Naive thymus-derived CD8-positive, alpha-beta T cell (primary cell): ENCODE measurements at regions of chr1 and their contacts with region 1.

Region 1: DNA sequence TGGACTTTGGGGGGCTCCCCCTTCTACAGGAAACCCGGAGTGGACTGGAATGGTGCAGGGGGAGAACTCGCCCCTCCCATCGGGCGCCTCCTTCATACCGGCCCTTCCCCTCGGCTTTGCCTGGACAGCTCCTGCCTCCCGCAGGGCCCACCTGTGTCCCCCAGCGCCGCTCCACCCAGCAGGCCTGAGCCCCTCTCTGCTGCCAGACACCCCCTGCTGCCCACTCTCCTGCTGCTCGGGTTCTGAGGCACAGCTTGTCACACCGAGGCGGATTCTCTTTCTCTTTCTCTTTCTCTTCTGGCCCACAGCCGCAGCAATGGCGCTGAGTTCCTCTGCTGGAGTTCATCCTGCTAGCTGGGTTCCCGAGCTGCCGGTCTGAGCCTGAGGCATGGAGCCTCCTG is at the start of gene TNFRSF14:
- DNase-seq: peak; percentile 53 to 87 (median 74)
- ATAC-seq: peak; percentile 73 to 79
- H3K4me3 Mint-ChIP-seq: peak within 1 kb of the TSS; percentile 91 to 99 (median 98)
- H3K27ac Mint-ChIP-seq: peak within 1 kb of the TSS; percentile 93 to 99 (median 98)
- H3K4me1 Mint-ChIP-seq: peaks cover 28 to 62% (median 44%) of the 10 kb centered on the region in 4 donors
- H3K27me3 Mint-ChIP-seq: no peaks in the 10 kb centered on the region
- polyA plus RNA-seq, gene TNFRSF14: 45.8 to 61.6 (median 48.9) TPM

Region 2: DNA sequence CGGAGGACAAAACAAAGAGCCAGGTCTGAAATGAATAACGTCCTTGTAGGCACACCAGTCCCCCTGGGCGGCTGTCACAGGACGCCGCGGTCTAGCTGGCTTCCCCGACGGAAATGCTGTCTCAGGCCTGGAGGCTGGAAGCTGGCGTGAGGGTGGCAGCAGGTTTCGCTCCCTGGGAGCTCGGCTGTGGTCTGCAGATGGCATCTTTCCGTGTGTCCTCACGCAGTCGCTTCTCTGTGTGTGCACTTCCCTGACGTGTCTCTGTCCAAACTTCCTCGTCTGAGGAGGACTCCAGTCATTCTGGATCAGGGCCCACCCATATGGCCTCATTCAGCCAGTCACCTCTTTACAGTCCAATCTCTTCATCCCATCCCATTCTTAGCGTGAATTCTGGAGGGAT is 14.1 kb after region 1 on chr1:
- POLR2A ChIA-PET with region 1: interaction called, 15 read pairs
- DNase-seq: no peak
- ATAC-seq: no peak
- H3K4me3 Mint-ChIP-seq: no peak overlapping the region
- H3K27ac Mint-ChIP-seq: peak overlapping the region in 5 of 10 donors; percentile 9 to 47 (median 34)
- H3K4me1 Mint-ChIP-seq: peaks cover 2 to 24% (median 10%) of the 10 kb centered on the region in 4 donors
- H3K27me3 Mint-ChIP-seq: no peaks in the 10 kb centered on the region

Region 3: GRCh38 chr1:2642560-2643413 is 86.5 kb after region 1 on chr1:
- POLR2A ChIA-PET with region 1: interaction called, 24 read pairs
- DNase-seq: peak; percentile 92 to 98 (median 96)
- ATAC-seq: peak; percentile 82 to 84
- H3K4me3 Mint-ChIP-seq: peak overlapping the region; percentile 78 to 94 (median 90)
- H3K27ac Mint-ChIP-seq: peak overlapping the region; percentile 85 to 97 (median 92)
- H3K4me1 Mint-ChIP-seq: peaks cover 8 to 32% (median 21%) of the 10 kb centered on the region in 4 donors
- H3K27me3 Mint-ChIP-seq: no peaks in the 10 kb centered on the region